Naive thymus-derived CD4-positive, alpha-beta T cell (primary cell): ENCODE measurements at regions of chr1 and their contacts with region 1.

Region 1: GRCh38 chr1:173420330-173420806 is 56.8 kb upstream of the PRDX6 start:
- DNase-seq: peak; percentile 25 to 71 (median 59)
- ATAC-seq: peak; percentile 83
- H3K4me3 ChIP-seq: no peak overlapping the region
- H3K4me3 Mint-ChIP-seq: peak overlapping the region in 2 of 10 donors; percentile 29 to 38
- H3K27ac ChIP-seq: no peak overlapping the region
- H3K27ac Mint-ChIP-seq: peak overlapping the region in 1 of 9 donors; percentile 20
- H3K4me1 ChIP-seq: no peaks in the 10 kb centered on the region
- H3K4me1 Mint-ChIP-seq: peaks cover 4 to 10% (median 6%) of the 10 kb centered on the region in 7 donors
- H3K27me3 ChIP-seq: no peaks in the 10 kb centered on the region
- H3K27me3 Mint-ChIP-seq: no peaks in the 10 kb centered on the region

Region 2: GRCh38 chr1:172826096-172826743 is 594.1 kb before region 1 on chr1:
- CTCF ChIA-PET with region 1: interaction called, 3 read pairs
- POLR2A ChIA-PET with region 1: no interaction called
- intact Hi-C with region 1: loop called in 1 of 2 experiments (anchors 2 kb)
- DNase-seq: peak in 1 of 9 donors; percentile 15
- ATAC-seq: peak; percentile 49
- H3K4me3 ChIP-seq: no peak overlapping the region
- H3K4me3 Mint-ChIP-seq: no peak overlapping the region
- H3K27ac ChIP-seq: no peak overlapping the region
- H3K27ac Mint-ChIP-seq: no peak overlapping the region
- H3K4me1 ChIP-seq: peaks cover 4 to 11% of the 10 kb centered on the region in 2 donors
- H3K4me1 Mint-ChIP-seq: peaks cover 0 to 10% (median 0%) of the 10 kb centered on the region in 7 donors
- H3K27me3 ChIP-seq: no peaks in the 10 kb centered on the region
- H3K27me3 Mint-ChIP-seq: peaks cover 0 to 28% (median 0%) of the 10 kb centered on the region in 5 donors

Region 3: GRCh38 chr1:173249349-173249748 is 171.0 kb before region 1 on chr1:
- CTCF ChIA-PET with region 1: no interaction called
- POLR2A ChIA-PET with region 1: no interaction called
- intact Hi-C with region 1: no loop called
- DNase-seq: no peak
- ATAC-seq: no peak
- H3K4me3 ChIP-seq: no peak overlapping the region
- H3K4me3 Mint-ChIP-seq: no peak overlapping the region
- H3K27ac ChIP-seq: no peak overlapping the region
- H3K27ac Mint-ChIP-seq: no peak overlapping the region
- H3K4me1 ChIP-seq: no peaks in the 10 kb centered on the region
- H3K4me1 Mint-ChIP-seq: peaks cover 0 to 5% (median 0%) of the 10 kb centered on the region in 7 donors
- H3K27me3 ChIP-seq: no peaks in the 10 kb centered on the region
- H3K27me3 Mint-ChIP-seq: peaks cover 0 to 11% (median 0%) of the 10 kb centered on the region in 5 donors

Region 4: DNA sequence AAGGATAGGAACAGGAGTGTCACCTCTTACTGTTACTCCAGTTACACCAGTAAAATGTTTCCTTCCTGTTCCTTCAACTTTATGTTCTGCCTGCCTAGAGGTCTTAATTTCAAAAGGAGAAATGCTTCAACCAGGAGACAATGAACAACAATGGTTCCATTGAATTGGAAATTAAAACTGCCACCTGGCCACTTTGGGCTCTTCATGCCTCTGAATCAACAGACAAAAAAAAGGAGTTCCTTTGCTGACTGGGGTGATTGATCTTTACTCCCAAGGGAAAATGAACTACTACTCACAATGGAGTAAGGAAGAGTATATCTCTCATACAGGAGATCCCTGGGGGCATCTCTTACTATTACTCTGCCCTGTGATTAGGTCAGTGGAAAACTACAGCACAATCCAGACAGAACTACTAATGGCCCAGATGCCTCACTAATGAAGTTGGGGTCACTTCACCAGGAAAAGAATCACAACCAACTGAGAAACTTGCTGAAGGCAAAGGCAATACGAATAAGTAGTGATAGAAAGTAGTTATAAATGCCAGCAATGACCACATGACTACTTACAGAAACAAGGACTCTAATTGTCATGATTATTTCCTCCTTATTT is 19.9 kb before region 1 on chr1:
- CTCF ChIA-PET with region 1: no interaction called
- POLR2A ChIA-PET with region 1: no interaction called
- intact Hi-C with region 1: no loop called
- DNase-seq: no peak
- ATAC-seq: no peak
- H3K4me3 ChIP-seq: no peak overlapping the region
- H3K4me3 Mint-ChIP-seq: no peak overlapping the region
- H3K27ac ChIP-seq: no peak overlapping the region
- H3K27ac Mint-ChIP-seq: no peak overlapping the region
- H3K4me1 ChIP-seq: no peaks in the 10 kb centered on the region
- H3K4me1 Mint-ChIP-seq: no peaks in the 10 kb centered on the region
- H3K27me3 ChIP-seq: no peaks in the 10 kb centered on the region
- H3K27me3 Mint-ChIP-seq: no peaks in the 10 kb centered on the region

Region 5: GRCh38 chr1:174022080-174022975 is 602.0 kb after region 1 on chr1 and contains the start of gene RC3H1:
- CTCF ChIA-PET with region 1: interaction called, 3 read pairs
- POLR2A ChIA-PET with region 1: no interaction called
- intact Hi-C with region 1: loop called in 1 of 2 experiments (anchors 1 kb)
- DNase-seq: peak; percentile 75 to 89 (median 83)
- ATAC-seq: peak; percentile 97
- H3K4me3 ChIP-seq: peak within 1 kb of the TSS; percentile 86
- H3K4me3 Mint-ChIP-seq: peak within 1 kb of the TSS; percentile 85 to 100 (median 98)
- H3K27ac ChIP-seq: peak within 1 kb of the TSS; percentile 94
- H3K27ac Mint-ChIP-seq: peak within 1 kb of the TSS; percentile 90 to 99 (median 98)
- H3K4me1 ChIP-seq: peaks cover 24 to 32% of the 10 kb centered on the region in 2 donors
- H3K4me1 Mint-ChIP-seq: peaks cover 19 to 52% (median 49%) of the 10 kb centered on the region in 7 donors
- H3K27me3 ChIP-seq: no peaks in the 10 kb centered on the region
- H3K27me3 Mint-ChIP-seq: peaks cover 0 to 5% (median 0%) of the 10 kb centered on the region in 5 donors
- total RNA-seq, gene RC3H1: 36.5 to 49.5 (median 47.7) TPM

Region 6: DNA sequence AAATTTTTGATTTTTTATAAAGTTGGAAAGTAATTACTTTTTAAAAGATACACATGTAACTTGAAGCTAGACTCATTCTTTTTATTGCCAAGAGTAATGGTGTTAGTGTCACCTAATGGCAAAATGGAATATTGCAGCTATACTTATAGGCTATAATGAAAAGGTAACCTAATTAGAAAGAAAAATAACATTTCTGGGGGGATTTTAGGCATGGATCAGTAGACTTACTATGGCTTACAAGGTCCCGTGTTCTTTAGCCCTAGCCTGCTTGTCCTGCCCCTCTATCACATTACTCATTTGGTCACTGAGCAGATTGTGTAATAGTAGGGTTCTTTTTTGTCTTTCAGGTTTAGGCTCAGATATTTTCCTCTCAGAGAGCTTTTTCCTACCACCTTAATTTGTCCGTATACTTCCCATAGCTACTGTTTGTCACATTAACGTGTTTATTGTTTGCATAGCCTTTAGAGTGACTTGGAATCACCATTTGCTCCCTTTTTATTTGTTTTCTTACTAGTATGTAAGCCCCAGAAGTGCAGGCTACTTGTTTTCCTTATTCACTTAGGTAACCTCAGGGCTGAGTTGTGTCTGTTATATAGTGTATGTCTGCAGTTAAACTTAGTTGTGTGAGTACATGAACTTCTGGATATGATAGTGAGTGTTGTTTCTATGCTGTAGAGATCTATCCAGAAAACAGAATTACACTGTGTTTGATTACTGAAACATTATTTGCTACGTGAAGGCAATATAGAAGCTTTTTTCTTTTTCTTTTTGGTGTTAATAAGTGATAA is 797.6 kb after region 1 on chr1:
- CTCF ChIA-PET with region 1: interaction called, 3 read pairs
- POLR2A ChIA-PET with region 1: no interaction called
- intact Hi-C with region 1: loop called (anchors 1 kb)
- DNase-seq: peak in 6 of 9 donors; percentile 2 to 46 (median 34)
- ATAC-seq: peak; percentile 69
- H3K4me3 ChIP-seq: no peak overlapping the region
- H3K4me3 Mint-ChIP-seq: no peak overlapping the region
- H3K27ac ChIP-seq: no peak overlapping the region
- H3K27ac Mint-ChIP-seq: no peak overlapping the region
- H3K4me1 ChIP-seq: no peaks in the 10 kb centered on the region
- H3K4me1 Mint-ChIP-seq: peaks cover 0 to 8% (median 0%) of the 10 kb centered on the region in 7 donors
- H3K27me3 ChIP-seq: no peaks in the 10 kb centered on the region
- H3K27me3 Mint-ChIP-seq: no peaks in the 10 kb centered on the region

Region 7: DNA sequence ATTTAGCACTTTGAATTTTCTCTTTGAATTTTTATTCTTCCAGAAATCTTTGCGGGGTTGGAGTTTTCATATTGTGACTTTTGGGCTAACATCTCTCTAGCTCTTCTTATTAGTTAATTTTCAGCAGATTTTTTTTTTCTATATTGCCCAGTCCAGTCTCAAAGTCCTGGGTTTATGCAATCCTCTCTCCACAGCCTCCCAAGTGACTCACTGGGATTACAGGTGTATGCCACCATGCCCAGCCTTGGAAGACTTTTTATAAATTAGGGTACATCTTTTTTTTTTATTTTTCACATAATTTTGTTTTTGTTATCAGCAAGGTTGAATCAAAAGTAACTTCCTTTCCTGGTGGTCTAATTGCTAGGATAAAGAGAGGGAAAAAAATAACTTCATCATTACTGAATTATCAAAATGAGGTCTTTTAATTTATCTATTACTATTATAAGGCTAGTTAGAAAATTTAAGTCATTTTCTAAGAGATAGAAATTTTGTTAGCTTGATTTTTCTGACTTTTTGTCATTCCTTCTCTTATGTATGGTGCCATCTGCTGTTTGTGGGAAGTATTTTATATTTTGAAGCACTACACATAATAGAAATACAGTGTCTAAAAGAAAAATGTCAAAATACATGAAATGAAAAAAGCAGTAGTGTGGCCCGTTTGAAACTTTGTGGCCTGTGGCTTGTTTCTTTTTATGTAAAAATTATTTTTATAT is 1306.0 kb after region 1 on chr1:
- CTCF ChIA-PET with region 1: no interaction called
- POLR2A ChIA-PET with region 1: no interaction called
- intact Hi-C with region 1: loop called in 1 of 2 experiments (anchors 1 kb)
- DNase-seq: peak in 1 of 9 donors; percentile 4
- ATAC-seq: no peak
- H3K4me3 ChIP-seq: no peak overlapping the region
- H3K4me3 Mint-ChIP-seq: no peak overlapping the region
- H3K27ac ChIP-seq: no peak overlapping the region
- H3K27ac Mint-ChIP-seq: no peak overlapping the region
- H3K4me1 ChIP-seq: no peaks in the 10 kb centered on the region
- H3K4me1 Mint-ChIP-seq: peaks cover 0 to 1% (median 0%) of the 10 kb centered on the region in 7 donors
- H3K27me3 ChIP-seq: no peaks in the 10 kb centered on the region
- H3K27me3 Mint-ChIP-seq: no peaks in the 10 kb centered on the region